Esophagus squamous epithelium (tissue), 5 donors: ENCODE measurements at regions of chr16 and their contacts with region 1.

Region 1: GRCh38 chr16:17467923-17468540 is 2.7 kb downstream of the XYLT1 start:
- DNase-seq: no peak
- H3K4me3 ChIP-seq: peak overlapping the region in 2 of 4 donors; percentile 75 to 82
- H3K27ac ChIP-seq: peak overlapping the region in 1 of 4 donors; percentile 7
- H3K4me1 ChIP-seq: peaks cover 23 to 50% (median 25%) of the 10 kb centered on the region in 3 donors
- H3K27me3 ChIP-seq: peaks cover 0 to 9% (median 0%) of the 10 kb centered on the region in 4 donors
- CTCF ChIP-seq: peak; percentile 46 to 72 (median 62)
- POLR2A ChIP-seq: no peak

Region 2: DNA sequence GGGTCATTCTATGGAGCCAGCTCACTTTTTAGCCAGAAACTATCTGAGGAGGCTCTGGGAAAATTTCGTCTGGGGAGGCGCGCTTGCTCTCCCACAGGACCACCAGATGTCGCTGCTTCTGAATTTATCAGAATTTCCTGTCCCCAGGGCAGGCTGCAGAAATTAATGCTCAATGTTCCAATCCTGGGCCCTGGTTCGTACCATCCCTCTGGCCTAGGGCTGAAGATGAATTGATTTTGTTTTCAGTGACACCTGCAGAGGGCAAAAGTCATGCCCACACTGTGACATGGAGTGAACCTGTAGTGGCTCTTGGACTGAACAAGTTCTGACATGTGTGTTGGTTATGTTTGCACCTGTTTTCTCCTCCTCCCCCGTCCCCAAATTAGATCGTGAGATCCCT is 606.5 kb before region 1 on chr16:
- intact Hi-C with region 1: loop called (anchors 10 kb)
- DNase-seq: no peak
- H3K4me3 ChIP-seq: no peak overlapping the region
- H3K27ac ChIP-seq: no peak overlapping the region
- H3K4me1 ChIP-seq: peaks cover 0 to 14% (median 2%) of the 10 kb centered on the region in 3 donors
- H3K27me3 ChIP-seq: peaks cover 0 to 32% (median 0%) of the 10 kb centered on the region in 4 donors
- CTCF ChIP-seq: peak; percentile 45 to 74 (median 65)
- POLR2A ChIP-seq: no peak